ENCODE measurements at regions of chr5 and their contacts with region 1.

Region 1: DNA sequence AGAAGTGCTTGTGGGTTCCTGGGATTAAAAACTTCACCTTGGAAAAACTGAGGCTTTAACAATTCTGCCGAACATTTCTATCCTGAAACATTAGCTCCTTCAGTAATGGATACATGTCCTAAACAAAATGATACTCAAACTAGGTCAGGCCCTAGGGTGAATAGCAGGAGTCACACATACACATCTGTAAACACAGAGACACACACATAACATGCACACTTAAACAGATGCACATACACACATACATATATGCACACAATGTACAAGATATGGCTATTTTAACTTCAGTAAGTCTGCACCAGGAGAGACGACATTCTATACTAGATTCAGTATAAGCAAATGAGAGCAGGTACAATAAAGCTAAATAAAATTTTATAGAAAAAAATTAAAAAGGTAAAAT is 124.4 kb downstream of the DCP2 start:
- DNase-seq: no peak
- ATAC-seq: no peak
- H3K4me3 Mint-ChIP-seq: no peak overlapping the region
- H3K27ac Mint-ChIP-seq: no peak overlapping the region
- H3K4me1 Mint-ChIP-seq: no peaks in the 10 kb centered on the region
- H3K27me3 Mint-ChIP-seq: no peaks in the 10 kb centered on the region
- CTCF ChIP-seq: no peak

Region 2: DNA sequence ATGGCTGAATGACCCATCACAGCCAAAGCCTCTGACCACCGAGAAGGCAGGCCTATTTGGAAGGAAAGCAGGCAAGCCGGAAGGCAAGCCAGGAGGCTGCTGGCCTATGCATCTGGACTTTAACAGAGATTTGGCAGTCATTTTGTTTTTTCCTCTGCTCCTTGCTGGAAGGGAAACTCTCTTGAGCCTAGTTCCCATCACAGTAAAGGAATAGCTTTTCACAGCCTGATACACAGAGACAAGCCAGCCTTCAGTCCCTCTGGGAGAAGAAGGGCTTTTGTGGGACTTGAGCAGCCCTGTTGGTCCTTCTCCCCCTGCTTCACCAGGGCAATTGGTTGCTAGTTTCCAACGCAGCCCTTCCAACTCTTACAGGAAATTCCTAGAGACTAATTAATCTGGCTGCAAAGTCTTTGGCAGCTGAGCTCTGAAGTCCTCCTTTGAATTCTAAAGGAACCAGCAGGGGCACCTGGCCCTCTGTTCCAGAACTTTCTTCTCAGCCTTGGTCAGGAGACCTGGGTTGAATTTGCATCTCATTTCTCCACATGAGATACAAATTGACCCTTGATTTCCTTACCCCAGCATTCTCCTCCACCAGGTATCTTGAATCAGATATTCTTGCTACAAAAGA is 524.6 kb before region 1 on chr5:
- CTCF ChIA-PET with region 1: no interaction called
- POLR2A ChIA-PET with region 1: interaction called, 10 read pairs
- DNase-seq: no peak
- ATAC-seq: 0 out of 2 replicates have a peak, but pooled peaks have one; percentile 28
- H3K4me3 Mint-ChIP-seq: no peak overlapping the region
- H3K27ac Mint-ChIP-seq: no peak overlapping the region
- H3K4me1 Mint-ChIP-seq: peaks cover 4% of the 10 kb centered on the region; the same call in 1 of the 2 replicates
- H3K27me3 Mint-ChIP-seq: no peaks in the 10 kb centered on the region
- CTCF ChIP-seq: no peak